AG04450 (cell line): ENCODE measurements at regions of chr6 and their contacts with region 1.

Region 1: GRCh38 chr6:158780988-158781708 is 38.0 kb downstream of the EZR start:
- DNase-seq: no peak
- H3K4me3 ChIP-seq: no peak overlapping the region
- H3K27ac ChIP-seq: no peak overlapping the region
- H3K27me3 ChIP-seq: no peaks in the 10 kb centered on the region
- CTCF ChIP-seq: no peak

Region 2: DNA sequence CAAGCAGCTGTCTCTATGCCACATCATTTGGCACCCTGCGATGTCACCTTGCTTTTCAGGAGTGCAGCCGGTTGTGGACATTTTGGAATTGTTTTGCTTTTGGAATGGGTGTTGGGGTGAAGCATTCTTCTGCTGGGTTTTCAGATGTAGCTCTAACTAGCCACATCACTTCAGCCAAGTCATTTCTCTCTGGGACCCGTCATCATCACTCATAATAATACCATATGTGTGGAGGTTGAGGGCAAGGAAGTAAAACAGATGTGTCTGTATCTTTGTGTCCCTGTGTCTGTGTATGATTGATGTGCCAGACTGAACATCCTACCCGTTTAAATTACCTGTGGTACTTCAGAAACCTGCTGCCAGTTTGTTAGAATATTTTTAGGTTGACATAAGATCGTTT is 518.4 kb before region 1 on chr6:
- CTCF ChIA-PET with region 1: no interaction called
- POLR2A ChIA-PET with region 1: no interaction called
- DNase-seq: no peak
- H3K4me3 ChIP-seq: no peak overlapping the region
- H3K27ac ChIP-seq: no peak overlapping the region
- H3K27me3 ChIP-seq: no peaks in the 10 kb centered on the region
- CTCF ChIP-seq: no peak

Region 3: DNA sequence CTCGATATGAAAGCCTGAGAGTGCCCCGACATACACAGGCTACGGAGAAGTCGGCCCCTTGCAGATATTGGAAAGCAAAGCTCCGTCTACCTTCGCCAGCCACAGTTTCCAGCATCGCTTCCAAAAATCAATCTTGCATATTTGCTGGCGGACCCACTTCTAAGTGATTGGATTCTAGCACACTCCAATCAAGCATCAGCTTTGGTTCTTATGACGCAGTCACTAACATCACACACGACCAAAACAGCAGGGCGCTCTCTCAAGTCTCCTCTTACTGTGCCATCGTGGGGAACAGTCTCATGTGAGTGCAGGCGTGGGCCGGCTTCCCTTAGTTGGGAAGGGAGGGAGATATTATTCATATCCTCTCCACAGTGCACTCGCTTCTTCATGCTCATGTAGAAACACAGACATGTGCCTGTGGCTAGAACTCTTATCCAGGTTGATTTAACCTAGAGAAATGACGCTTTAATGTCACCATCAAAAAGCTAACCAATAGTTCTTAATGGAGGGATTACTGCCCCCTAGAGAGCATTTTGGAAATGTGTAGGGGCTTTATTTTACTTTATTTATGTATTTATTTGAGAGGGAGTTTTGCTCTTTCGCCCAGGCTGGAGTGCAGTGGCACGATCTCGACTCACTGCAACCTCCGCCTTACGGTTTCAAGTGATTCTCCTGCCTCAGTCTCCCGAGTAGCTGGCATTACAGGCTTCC is 682.1 kb after region 1 on chr6:
- CTCF ChIA-PET with region 1: no interaction called
- POLR2A ChIA-PET with region 1: interaction called, 11 read pairs
- DNase-seq: no peak
- H3K4me3 ChIP-seq: no peak overlapping the region
- H3K27ac ChIP-seq: no peak overlapping the region
- H3K27me3 ChIP-seq: no peaks in the 10 kb centered on the region
- CTCF ChIP-seq: no peak